Thyroid gland (tissue), 4 donors: ENCODE measurements at regions of chr1 and their contacts with region 1.

Region 1: DNA sequence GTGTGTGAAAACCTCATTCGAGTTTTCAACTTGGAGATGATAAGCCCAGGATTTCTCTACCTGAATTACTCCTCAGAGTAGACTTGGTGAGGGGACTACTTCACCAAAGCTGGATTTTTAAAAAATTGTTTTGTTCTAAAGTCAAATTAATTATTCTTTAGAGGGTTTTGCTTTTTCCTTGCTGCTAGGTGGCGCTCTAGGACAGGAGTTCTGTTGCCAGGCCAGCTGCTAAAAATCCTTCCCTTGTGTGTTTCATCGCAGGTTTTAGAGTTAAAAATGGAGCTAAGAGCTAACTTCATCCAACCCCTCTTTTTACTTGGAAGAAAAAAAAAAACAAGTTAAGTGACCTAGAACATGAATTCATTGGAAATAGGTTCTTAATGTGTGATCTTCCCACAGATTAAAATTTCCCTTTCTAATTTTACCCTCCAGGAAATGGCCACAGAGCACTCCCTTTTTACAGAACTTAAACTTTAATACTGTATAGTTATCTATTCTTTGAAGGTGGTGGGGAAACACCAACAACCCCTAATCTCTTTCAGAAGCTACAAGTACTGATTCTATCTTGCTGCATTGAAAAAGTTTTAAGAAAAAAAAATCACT is 36.7 kb upstream of the FAM163A start:
- DNase-seq: peak; percentile 53 to 65
- H3K4me3 ChIP-seq: no peak overlapping the region
- H3K27ac ChIP-seq: no peak overlapping the region
- H3K4me1 ChIP-seq: no peaks in the 10 kb centered on the region
- H3K27me3 ChIP-seq: no peaks in the 10 kb centered on the region
- CTCF ChIP-seq: peak; percentile 49 to 88 (median 76)
- POLR2A ChIP-seq: no peak

Region 2: DNA sequence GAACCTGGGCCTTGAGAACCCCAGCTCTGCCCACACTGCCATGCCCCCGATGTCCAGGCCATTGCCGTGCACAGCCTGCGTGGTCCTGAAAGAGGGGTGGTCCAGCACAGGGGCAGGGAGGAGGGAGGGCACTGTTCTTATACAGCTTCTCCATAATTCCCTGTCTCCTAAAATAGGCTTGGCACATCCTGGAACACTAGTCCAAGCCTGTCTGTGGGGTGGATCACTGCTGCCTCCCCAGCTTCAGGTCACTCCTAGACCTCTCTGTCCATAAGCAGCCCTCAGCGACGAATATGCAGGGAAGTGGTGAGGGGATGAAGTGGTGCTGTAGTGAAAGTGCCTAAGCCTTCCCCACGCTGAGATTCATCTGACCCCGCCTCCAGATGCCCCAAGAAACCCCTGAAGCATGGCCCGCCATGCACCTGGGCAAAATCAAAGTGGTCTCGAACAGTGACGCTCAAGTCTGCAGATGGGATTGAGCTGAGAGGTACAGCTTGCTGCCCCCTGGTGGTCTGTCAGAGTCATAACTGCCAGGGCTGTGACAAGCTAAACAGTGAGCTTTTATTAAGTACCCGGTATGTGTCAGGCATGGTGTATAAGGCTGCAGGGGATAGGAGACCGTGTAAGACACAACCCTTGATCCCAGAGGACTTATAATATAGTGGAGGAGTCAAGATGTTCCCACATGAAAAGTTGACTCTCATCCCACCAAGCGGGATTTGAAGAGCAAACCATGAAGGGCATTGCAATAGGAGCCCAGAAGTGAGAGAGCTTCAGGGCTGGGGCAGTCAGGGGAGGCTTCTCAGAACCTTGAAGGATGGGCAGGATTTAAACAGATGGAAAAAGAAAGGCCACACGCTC is 103.3 kb after region 1 on chr1:
- intact Hi-C with region 1: loop called (anchors 2 kb)
- DNase-seq: peak; percentile 61 to 71
- H3K4me3 ChIP-seq: no peak overlapping the region
- H3K27ac ChIP-seq: no peak overlapping the region
- H3K4me1 ChIP-seq: peaks cover 3 to 8% of the 10 kb centered on the region in 2 donors
- H3K27me3 ChIP-seq: no peaks in the 10 kb centered on the region
- CTCF ChIP-seq: peak; percentile 77 to 93 (median 90)
- POLR2A ChIP-seq: no peak

Region 3: GRCh38 chr1:180123463-180123936 is 417.1 kb after region 1 on chr1:
- intact Hi-C with region 1: no loop called
- DNase-seq: no peak
- H3K4me3 ChIP-seq: no peak overlapping the region
- H3K27ac ChIP-seq: no peak overlapping the region
- H3K4me1 ChIP-seq: no peaks in the 10 kb centered on the region
- H3K27me3 ChIP-seq: no peaks in the 10 kb centered on the region
- CTCF ChIP-seq: no peak
- POLR2A ChIP-seq: no peak

Region 4: GRCh38 chr1:180178511-180179161 is 472.2 kb after region 1 on chr1:
- intact Hi-C with region 1: loop called (anchors 10 kb)
- DNase-seq: peak; percentile 51 to 66
- H3K4me3 ChIP-seq: no peak overlapping the region
- H3K27ac ChIP-seq: no peak overlapping the region
- H3K4me1 ChIP-seq: peaks cover 7 to 11% of the 10 kb centered on the region in 2 donors
- H3K27me3 ChIP-seq: no peaks in the 10 kb centered on the region
- CTCF ChIP-seq: peak; percentile 75 to 95 (median 82)
- POLR2A ChIP-seq: no peak